ENCODE measurements at regions of chr9 and their contacts with region 1.

Region 1: GRCh38 chr9:126361810-126362238 is 35.2 kb downstream of the MVB12B start:
- DNase-seq: no peak
- H3K4me3 ChIP-seq: no peak overlapping the region
- H3K27ac ChIP-seq: no peak overlapping the region
- H3K4me1 ChIP-seq: no peaks in the 10 kb centered on the region
- H3K27me3 ChIP-seq: no peaks in the 10 kb centered on the region
- CTCF ChIP-seq: no peak

Region 2: GRCh38 chr9:125883565-125884217 is 478.1 kb before region 1 on chr9:
- CTCF ChIA-PET with region 1: interaction called, 10 read pairs
- POLR2A ChIA-PET with region 1: no interaction called
- intact Hi-C with region 1: no loop called
- DNase-seq: no peak
- H3K4me3 ChIP-seq: no peak overlapping the region
- H3K27ac ChIP-seq: no peak overlapping the region
- H3K4me1 ChIP-seq: peaks cover 6% of the 10 kb centered on the region
- H3K27me3 ChIP-seq: peaks cover 70% of the 10 kb centered on the region
- CTCF ChIP-seq: no peak

Measured in A673 (cell line).